ENCODE measurements at regions of chr19 and their contacts with region 1.

Region 1: GRCh38 chr19:52853880-52854279 is 3.5 kb downstream of the ZNF468 start:
- DNase-seq: no peak
- H3K4me3 ChIP-seq: no peak overlapping the region
- H3K27ac ChIP-seq: no peak overlapping the region
- H3K4me1 ChIP-seq: peaks cover 1% of the 10 kb centered on the region
- H3K27me3 ChIP-seq: no peaks in the 10 kb centered on the region
- CTCF ChIP-seq: no peak
- EP300 ChIP-seq: no peak
- POLR2A ChIP-seq: no peak

Region 2: DNA sequence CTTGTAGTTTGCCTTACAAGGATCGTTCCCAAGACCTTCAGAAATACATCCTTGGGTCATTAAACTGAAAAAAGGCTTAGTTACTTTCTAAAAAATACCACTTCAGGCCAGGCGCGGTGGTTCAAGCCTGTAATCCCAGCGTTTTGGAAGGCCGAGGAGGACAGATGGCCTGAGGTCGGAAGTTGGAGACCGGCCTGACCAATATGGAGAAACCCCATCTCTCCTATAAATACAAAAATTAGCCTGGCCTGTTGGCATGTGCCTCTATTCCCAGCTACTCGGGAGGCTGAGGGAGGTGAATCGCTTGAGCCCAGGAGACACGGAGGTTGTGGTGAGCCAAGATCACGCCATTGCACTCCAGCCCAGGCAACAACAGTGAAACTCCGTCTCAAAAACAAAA is 30.2 kb before region 1 on chr19:
- intact Hi-C with region 1: loop called in 1 of 4 experiments (anchors 2 kb)
- DNase-seq: no peak
- H3K4me3 ChIP-seq: no peak overlapping the region
- H3K27ac ChIP-seq: no peak overlapping the region
- H3K4me1 ChIP-seq: no peaks in the 10 kb centered on the region
- H3K27me3 ChIP-seq: no peaks in the 10 kb centered on the region
- CTCF ChIP-seq: no peak
- EP300 ChIP-seq: no peak
- POLR2A ChIP-seq: no peak

Region 3: DNA sequence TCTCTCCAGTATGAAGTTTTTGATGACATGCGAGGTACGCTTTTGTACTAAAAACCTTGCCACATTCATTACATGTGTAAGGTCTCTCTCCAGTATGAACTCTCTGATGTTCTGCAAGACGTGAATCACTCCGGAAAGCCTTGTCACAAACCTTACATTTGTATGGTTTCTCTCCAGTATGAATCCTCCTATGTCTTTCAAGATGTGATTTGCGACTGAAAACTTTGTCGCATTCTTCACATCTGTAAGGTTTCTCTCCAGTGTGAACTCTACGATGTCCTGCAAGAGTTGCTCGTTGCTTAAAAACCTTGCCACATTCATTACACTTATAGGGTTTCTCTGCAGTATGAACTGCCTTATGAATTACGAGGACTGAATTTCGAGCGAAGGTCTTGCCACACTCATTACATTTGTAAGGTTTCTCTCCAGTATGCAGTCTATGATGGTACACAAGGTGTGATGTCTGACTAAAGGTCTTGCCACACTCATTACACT is 27.1 kb after region 1 on chr19:
- intact Hi-C with region 1: no loop called
- DNase-seq: no peak
- H3K4me3 ChIP-seq: no peak overlapping the region
- H3K27ac ChIP-seq: no peak overlapping the region
- H3K4me1 ChIP-seq: no peaks in the 10 kb centered on the region
- H3K27me3 ChIP-seq: no peaks in the 10 kb centered on the region
- CTCF ChIP-seq: no peak
- EP300 ChIP-seq: no peak
- POLR2A ChIP-seq: no peak

Measured in ovary (tissue), 10 donors.